Prostate gland (tissue), 2 donors: ENCODE measurements at regions of chr7 and their contacts with region 1.

Region 1: DNA sequence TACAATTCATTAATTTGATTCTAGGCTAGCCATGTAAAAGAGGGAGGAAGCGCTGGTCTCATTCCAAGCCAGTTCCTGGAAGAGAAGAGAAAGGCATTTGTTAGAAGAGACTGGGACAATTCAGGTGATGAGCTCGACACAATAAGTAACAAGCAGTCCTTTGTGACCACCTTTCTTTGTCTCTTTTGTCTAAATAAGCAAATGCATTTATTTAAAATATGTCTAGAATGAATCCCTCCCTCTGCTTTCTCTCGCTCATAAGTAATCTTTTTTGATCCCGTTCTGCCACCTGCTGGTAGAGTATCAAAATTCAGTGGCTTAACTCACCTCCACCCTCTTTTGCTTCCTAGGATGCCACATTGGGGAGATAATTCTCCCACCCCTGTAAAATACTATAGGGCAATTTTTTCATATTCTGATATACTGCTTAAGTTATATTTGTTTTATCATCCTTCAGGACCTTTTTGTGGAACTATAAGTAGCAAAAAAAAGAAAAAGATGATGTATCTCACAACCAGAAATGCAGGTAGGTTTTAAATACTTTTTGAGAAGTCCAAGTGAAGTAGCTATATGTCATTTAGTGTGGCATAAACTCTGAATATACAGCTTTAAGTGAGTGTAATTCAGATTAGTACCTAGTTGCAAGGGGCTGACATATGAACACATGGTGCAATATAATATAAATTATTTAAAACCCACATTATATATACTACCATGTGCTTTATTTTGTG is 91.5 kb downstream of the GSDME start:
- DNase-seq: peak; percentile 29
- H3K4me3 ChIP-seq: no peak overlapping the region
- H3K27ac ChIP-seq: no peak overlapping the region
- H3K4me1 ChIP-seq: no peaks in the 10 kb centered on the region
- H3K27me3 ChIP-seq: no peaks in the 10 kb centered on the region
- CTCF ChIP-seq: peak; percentile 41 to 76 (median 71)
- POLR2A ChIP-seq: no peak

Region 2: DNA sequence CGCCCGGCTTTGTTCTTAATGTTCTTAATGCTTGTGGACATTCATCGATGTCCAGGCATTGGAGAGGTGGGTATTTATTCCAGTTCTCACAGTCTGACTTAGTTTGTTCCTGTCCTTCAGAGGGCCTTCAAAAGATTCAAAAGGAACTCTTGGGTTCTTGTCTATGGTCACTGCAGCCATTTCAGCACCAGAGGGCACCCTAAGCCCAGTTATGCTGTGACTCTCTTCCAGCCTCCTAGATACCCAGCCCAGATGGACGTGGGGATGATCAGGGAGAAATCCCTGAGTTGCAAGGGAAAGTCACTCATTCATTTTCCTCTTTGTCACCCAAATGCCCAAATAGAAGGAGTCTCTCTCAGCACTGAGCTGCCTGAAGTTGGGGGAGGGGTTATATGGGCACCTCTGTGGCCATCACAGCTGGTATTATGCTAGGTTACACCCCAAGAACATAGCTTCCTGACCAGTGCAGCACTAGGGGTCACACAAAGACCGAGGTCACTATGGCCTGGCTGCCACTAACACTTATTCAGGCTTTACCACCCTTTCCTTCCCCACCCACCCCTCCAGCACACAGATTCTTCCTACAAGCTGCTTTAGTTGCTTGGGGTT is 1095.0 kb before region 1 on chr7:
- intact Hi-C with region 1: loop called (anchors 10 kb)
- DNase-seq: peak; percentile 59
- H3K4me3 ChIP-seq: no peak overlapping the region
- H3K27ac ChIP-seq: no peak overlapping the region
- H3K4me1 ChIP-seq: no peaks in the 10 kb centered on the region
- H3K27me3 ChIP-seq: no peaks in the 10 kb centered on the region
- CTCF ChIP-seq: peak; percentile 17 to 81 (median 68)
- POLR2A ChIP-seq: no peak

Region 3: DNA sequence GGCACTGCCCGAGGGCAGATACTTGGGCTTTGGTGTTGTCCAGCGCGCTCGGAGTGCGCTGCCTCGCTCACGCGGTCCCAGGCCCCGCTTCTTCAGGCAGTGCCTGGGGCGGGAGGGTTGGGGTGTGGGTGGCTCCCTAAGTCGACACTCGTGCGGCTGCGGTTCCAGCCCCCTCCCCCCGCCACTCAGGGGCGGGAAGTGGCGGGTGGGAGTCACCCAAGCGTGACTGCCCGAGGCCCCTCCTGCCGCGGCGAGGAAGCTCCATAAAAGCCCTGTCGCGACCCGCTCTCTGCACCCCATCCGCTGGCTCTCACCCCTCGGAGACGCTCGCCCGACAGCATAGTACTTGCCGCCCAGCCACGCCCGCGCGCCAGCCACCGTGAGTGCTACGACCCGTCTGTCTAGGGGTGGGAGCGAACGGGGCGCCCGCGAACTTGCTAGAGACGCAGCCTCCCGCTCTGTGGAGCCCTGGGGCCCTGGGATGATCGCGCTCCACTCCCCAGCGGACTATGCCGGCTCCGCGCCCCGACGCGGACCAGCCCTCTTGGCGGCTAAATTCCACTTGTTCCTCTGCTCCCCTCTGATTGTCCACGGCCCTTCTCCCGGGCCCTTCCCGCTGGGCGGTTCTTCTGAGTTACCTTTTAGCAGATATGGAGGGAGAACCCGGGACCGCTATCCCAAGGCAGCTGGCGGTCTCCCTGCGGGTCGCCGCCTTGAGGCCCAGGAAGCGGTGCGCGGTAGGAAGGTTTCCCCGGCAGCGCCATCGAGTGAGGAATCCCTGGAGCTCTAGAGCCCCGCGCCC is 381.6 kb before region 1 on chr7 and contains the start of gene NPY:
- intact Hi-C with region 1: loop called (anchors 10 kb)
- DNase-seq: no peak
- H3K4me3 ChIP-seq: peak within 1 kb of the TSS; percentile 28 to 45
- H3K27ac ChIP-seq: peak within 1 kb of the TSS; percentile 28 to 37
- H3K4me1 ChIP-seq: no peaks in the 10 kb centered on the region
- H3K27me3 ChIP-seq: no peaks in the 10 kb centered on the region
- CTCF ChIP-seq: no peak
- POLR2A ChIP-seq: no peak
- total RNA-seq, gene NPY: 55.6 to 2,513 TPM

Region 4: DNA sequence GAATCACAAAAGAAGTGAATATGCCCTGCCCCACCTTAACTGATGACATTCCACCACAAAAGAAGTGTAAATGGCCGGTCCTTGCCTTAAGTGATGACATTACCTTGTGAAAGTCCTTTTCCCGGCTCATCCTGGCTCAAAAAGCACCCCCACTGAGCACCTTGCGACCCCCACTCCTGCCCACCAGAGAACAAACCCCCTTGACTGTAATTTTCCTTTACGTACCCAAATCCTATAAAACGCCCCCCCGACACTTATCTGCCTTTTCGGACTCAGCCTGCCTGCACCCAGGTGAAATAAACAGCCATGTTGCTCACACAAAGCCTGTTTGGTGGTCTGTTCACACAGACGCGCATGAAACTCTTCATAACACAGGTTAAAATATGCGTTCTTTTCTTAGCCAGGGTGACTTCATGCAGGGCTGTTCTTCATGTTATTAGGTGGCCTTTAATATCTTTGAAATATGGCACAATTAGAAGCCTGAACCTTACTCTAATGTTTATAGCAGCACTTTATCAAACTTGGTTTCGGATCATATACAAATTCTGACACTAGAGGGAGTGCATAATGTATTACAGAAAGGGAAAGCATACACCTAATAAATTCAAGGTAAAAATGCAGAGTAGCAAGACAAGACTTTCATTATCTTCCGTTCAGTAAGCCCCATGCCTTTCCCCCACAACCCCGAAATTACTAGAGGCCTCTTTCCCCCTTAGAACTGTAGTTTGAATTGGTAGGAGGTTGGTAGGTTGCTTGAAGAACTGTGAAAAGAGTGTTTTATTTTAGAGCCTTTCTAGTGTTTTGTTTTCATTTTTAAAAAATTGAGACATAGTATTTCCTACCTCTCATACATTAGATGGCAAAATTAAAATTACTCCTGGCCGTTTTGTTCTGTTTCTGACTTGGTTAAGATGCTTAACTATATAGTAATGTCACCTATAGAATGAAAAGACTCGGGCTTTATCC is 263.8 kb before region 1 on chr7:
- intact Hi-C with region 1: loop called (anchors 10 kb)
- DNase-seq: no peak
- H3K4me3 ChIP-seq: no peak overlapping the region
- H3K27ac ChIP-seq: no peak overlapping the region
- H3K4me1 ChIP-seq: no peaks in the 10 kb centered on the region
- H3K27me3 ChIP-seq: no peaks in the 10 kb centered on the region
- CTCF ChIP-seq: peak in 3 of 4 experiments; percentile 31 to 53 (median 48)
- POLR2A ChIP-seq: no peak